PC-3 (cell line): ENCODE measurements at regions of chr3 and their contacts with region 1.

Region 1: GRCh38 chr3:172562871-172563863 is 39.9 kb upstream of the TNFSF10 start:
- DNase-seq: peak; percentile 62
- ATAC-seq: peak; percentile 59
- H3K4me3 ChIP-seq: peak overlapping the region; percentile 40
- H3K27ac ChIP-seq: peak overlapping the region; percentile 91
- H3K4me1 ChIP-seq: peaks cover 44% of the 10 kb centered on the region
- H3K27me3 ChIP-seq: no peaks in the 10 kb centered on the region
- CTCF ChIP-seq: no peak

Region 2: DNA sequence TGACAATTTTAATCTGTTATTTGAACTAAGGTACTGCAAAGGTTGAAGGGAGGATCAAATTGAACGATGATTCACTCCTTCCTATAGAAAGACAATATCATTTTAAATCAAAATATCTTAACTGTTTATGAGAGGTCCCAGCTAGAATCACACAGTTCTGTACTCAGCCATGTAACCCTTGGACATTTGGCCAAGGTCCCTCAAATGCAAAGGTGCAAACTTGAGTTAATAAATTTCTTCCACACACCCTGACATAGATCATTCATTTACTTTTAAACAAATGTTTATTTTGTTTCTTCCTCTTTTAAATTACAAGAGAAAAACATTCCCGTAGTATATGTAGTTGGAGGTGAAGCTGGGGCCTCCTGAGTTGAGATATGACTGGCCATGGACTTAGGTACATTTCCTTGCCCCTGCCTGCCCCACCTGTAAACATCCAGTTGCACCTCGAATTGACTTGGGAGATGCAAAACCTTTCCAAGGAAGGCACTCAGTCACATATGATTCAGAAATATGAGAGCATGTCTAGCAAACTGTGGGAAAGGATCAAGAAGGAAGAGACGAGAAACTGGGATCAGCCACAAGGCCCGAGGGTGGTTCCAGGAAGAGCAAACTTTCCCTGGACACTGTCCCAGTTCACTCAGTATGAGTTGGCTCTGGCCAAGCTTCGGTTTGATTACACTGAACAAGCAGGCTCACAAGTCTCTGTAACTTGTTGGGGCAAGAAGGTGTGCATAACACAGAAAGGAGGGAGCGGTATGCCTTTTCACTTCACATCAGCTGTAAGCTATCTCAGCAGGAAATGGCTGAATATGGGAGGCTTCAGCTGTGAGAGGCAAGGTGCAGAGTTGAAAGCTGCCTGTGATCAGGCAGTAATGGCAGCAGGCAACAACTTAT is 46.6 kb before region 1 on chr3:
- CTCF ChIA-PET with region 1: no interaction called
- POLR2A ChIA-PET with region 1: no interaction called
- intact Hi-C with region 1: loop called (anchors 1 kb)
- DNase-seq: peak; percentile 95
- ATAC-seq: peak; percentile 99
- H3K4me3 ChIP-seq: peak overlapping the region; percentile 33; the same call in 1 of the 2 replicates
- H3K27ac ChIP-seq: peak overlapping the region; percentile 80
- H3K4me1 ChIP-seq: peaks cover 20% of the 10 kb centered on the region
- H3K27me3 ChIP-seq: no peaks in the 10 kb centered on the region
- CTCF ChIP-seq: no peak

Region 3: DNA sequence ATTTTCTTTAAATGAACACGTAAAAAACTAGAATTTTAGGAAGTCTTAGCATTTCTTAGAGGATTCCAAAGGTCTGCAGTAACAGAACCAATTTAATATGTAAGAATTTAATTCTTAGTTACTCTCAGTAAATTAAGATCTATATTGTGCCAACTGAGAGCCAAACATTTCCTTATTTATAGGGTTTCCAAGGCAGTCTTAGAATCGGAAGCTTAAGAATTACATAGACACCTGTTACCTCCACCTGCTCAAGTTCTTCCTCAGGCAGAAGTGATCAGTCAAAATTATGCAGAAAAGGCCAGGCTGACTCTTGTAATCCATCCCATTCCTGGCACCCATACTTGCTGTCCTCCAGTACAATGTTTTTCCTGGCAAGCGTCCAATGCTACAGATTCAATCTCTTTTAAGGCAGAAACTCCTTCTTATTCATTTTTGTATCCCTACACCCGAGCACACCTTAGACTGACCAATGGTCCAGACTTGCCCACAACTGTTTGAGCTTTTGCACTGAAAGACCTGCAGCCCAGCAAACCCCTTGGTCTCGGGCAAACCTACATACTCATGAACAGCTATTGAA is 83.4 kb after region 1 on chr3:
- CTCF ChIA-PET with region 1: no interaction called
- POLR2A ChIA-PET with region 1: no interaction called
- intact Hi-C with region 1: loop called (anchors 5 kb)
- DNase-seq: peak; percentile 41
- ATAC-seq: no peak
- H3K4me3 ChIP-seq: no peak overlapping the region
- H3K27ac ChIP-seq: no peak overlapping the region
- H3K4me1 ChIP-seq: peaks cover 22% of the 10 kb centered on the region
- H3K27me3 ChIP-seq: no peaks in the 10 kb centered on the region
- CTCF ChIP-seq: no peak